ENCODE measurements at regions of chr7 and their contacts with region 1.

Region 1: GRCh38 chr7:43454936-43455518 is 127.9 kb upstream of the STK17A start:
- DNase-seq: no peak
- H3K4me3 ChIP-seq: no peak overlapping the region
- H3K27ac ChIP-seq: no peak overlapping the region
- H3K27me3 ChIP-seq: no peaks in the 10 kb centered on the region
- CTCF ChIP-seq: peak; percentile 60

Region 2: GRCh38 chr7:43439631-43440401 is 15.2 kb before region 1 on chr7:
- CTCF ChIA-PET with region 1: interaction called, 25 read pairs
- POLR2A ChIA-PET with region 1: no interaction called
- DNase-seq: no peak
- H3K4me3 ChIP-seq: no peak overlapping the region
- H3K27ac ChIP-seq: no peak overlapping the region
- H3K27me3 ChIP-seq: no peaks in the 10 kb centered on the region
- CTCF ChIP-seq: peak; percentile 77

Region 3: GRCh38 chr7:43481902-43482678 is 27.1 kb after region 1 on chr7:
- CTCF ChIA-PET with region 1: interaction called, 10 read pairs
- POLR2A ChIA-PET with region 1: no interaction called
- DNase-seq: no peak
- H3K4me3 ChIP-seq: no peak overlapping the region
- H3K27ac ChIP-seq: no peak overlapping the region
- H3K27me3 ChIP-seq: no peaks in the 10 kb centered on the region
- CTCF ChIP-seq: no peak

Measured in AG04450 (cell line).